Heart left ventricle (tissue), 16 donors: ENCODE measurements at regions of chr18 and their contacts with region 1.

Region 1: GRCh38 chr18:13726232-13726971 is at the starts of genes FAM210A and RNMT:
- DNase-seq: peak; percentile 96 to 98 (median 98)
- ATAC-seq: peak; percentile 96 to 98 (median 98)
- H3K4me3 ChIP-seq: peak within 1 kb of the TSS; percentile 72 to 97 (median 86)
- H3K27ac ChIP-seq: peak within 1 kb of the TSS; percentile 84 to 99 (median 91)
- H3K4me1 ChIP-seq: peaks cover 0 to 50% (median 24%) of the 10 kb centered on the region in 12 donors
- H3K27me3 ChIP-seq: no peaks in the 10 kb centered on the region
- CTCF ChIP-seq: peak in 5 of 12 donors; percentile 19 to 46 (median 41)
- POLR2A ChIP-seq: peak in 1 of 2 donors; percentile 71
- total RNA-seq, gene FAM210A: 29.3 to 66.4 (median 48.7) TPM
- total RNA-seq, gene RNMT: 19.9 to 38.0 (median 26.6) TPM

Region 2: GRCh38 chr18:13548966-13549879 is 177.2 kb before region 1 on chr18:
- intact Hi-C with region 1: loop called in 1 of 10 experiments (anchors 10 kb)
- DNase-seq: no peak
- ATAC-seq: peak; percentile 45 to 69 (median 63)
- H3K4me3 ChIP-seq: no peak overlapping the region
- H3K27ac ChIP-seq: peak overlapping the region in 10 of 12 donors; percentile 16 to 81 (median 36)
- H3K4me1 ChIP-seq: peaks cover 2 to 74% (median 27%) of the 10 kb centered on the region in 12 donors
- H3K27me3 ChIP-seq: no peaks in the 10 kb centered on the region
- CTCF ChIP-seq: no peak
- POLR2A ChIP-seq: no peak

Region 3: DNA sequence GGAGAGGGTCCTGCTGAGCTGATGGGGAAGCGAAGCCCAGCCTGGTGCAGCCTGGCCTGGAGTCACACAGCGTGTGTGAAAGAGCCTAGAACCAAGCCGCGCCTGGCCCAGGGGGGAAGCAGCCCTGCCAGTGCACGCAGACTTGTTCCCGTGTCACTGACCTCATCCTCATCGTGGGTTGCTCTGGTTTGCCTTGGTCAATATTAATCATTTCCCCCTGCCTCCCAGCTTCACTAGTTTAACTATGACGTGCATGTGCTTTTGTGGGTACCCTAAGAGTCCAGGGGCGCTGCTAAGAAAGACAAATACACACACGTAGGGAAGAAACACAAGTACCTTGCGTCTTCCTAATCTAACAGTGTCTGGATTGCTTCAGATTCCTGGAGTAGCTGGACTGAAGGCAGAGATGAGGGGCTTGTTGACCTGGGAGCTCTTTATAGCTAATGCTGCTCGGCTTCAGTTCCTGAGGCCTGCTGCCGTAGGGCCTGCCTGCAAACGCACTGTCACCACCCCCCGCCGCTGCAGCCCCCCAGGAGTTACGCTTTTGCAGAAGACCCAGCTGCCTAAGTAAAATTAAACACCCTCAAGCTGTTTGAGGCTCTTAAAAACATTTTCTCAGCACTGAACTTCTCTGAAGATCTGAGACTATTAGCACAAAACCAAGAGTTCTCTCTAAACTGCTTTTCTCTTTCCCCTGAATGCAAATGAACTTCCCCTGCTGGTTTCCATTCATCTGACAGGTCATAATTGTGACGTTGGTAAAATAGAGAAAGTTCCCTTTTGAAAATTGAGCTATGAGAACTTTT is 159.3 kb before region 1 on chr18:
- intact Hi-C with region 1: loop called in 2 of 10 experiments (anchors 10 kb)
- DNase-seq: peak in 3 of 5 donors; percentile 56 to 79 (median 73)
- ATAC-seq: peak in 3 of 4 donors; percentile 6 to 10 (median 6)
- H3K4me3 ChIP-seq: peak overlapping the region in 1 of 12 donors; percentile 25
- H3K27ac ChIP-seq: peak overlapping the region in 8 of 12 donors; percentile 22 to 94 (median 72)
- H3K4me1 ChIP-seq: peaks cover 0 to 73% (median 41%) of the 10 kb centered on the region in 12 donors
- H3K27me3 ChIP-seq: no peaks in the 10 kb centered on the region
- CTCF ChIP-seq: no peak
- POLR2A ChIP-seq: no peak

Region 4: DNA sequence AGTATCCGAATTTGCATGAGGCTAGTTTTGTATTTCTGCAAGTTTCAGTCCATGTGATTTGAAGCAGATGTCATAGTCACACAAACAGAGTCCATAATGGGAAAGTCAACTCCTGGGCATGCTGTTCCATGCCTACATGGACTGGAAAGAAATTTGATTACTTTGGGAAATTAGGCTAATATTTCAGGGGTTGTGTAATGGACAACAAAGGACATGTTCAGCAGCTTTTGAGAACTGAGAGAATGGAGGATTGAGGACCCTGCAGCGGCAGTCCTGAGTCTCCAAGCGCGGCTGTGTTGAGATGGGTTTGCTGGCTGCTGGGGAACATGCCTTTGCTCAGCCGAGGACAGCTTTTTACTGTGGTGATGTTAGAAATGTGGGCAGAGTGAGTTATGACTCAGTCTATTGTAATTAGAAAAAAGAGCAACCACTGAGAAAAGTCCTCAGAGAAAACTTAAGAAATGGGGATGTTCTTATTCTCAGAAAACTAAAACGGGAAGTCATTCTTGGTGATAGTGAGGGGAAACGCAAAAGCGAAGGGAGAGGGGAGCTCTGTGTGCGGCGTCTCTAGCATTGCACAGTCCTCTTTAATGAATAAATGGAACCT is 149.2 kb before region 1 on chr18:
- intact Hi-C with region 1: no loop called
- DNase-seq: no peak
- ATAC-seq: peak; percentile 28 to 64 (median 59)
- H3K4me3 ChIP-seq: peak overlapping the region in 1 of 12 donors; percentile 24
- H3K27ac ChIP-seq: peak overlapping the region in 3 of 12 donors; percentile 15 to 86 (median 31)
- H3K4me1 ChIP-seq: peaks cover 0 to 45% (median 16%) of the 10 kb centered on the region in 12 donors
- H3K27me3 ChIP-seq: no peaks in the 10 kb centered on the region
- CTCF ChIP-seq: no peak
- POLR2A ChIP-seq: no peak

Region 5: DNA sequence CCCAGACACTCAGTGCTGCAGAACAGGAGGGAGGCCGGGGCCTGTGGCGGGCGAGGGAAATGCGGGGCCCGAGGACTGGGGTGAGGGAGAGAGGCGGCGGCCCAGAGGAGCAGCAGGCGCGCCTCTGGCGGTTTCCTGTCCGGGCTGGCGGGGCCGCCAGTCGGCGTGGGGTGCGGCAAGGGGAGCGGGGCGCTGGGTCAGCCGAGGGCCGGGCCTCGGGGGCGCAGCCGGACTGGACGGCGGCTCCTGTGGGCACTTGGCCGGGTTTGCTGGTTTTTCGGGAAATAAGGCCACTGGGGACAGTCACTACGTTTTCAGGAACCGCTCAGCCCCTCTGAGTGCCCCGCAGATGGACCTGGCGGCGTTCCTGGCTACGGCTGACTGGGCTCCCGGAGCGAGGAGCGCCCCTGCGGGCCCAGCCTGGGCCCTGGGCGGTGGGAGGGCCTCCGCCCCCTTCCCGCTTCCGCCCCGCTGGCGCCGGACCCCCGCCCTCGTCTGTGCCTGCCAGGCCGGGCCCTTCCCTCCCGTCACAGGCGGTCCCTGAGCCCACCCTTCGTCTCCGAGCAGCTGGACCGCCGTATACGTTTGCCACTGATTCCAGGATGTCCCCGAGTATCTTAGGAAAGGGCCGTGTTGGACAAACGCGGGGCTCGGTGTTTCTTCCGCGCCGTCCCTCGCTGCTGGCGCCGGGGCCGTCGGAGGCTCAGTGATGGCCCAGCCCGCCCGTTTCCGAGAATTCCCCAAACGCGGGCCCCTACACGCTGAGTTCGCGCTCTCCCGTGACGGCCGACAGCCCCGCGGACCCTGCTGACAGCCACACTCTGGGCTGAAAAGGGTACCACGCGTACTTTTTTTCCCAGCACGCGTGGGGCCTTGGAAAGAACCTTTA is 84.6 kb before region 1 on chr18:
- intact Hi-C with region 1: loop called in 8 of 10 experiments (anchors 5 to 10 kb)
- DNase-seq: peak; percentile 53 to 83 (median 72)
- ATAC-seq: peak; percentile 24 to 75 (median 70)
- H3K4me3 ChIP-seq: peak overlapping the region; percentile 5 to 59 (median 48)
- H3K27ac ChIP-seq: peak overlapping the region; percentile 54 to 90 (median 77)
- H3K4me1 ChIP-seq: peaks cover 0 to 50% (median 19%) of the 10 kb centered on the region in 12 donors
- H3K27me3 ChIP-seq: no peaks in the 10 kb centered on the region
- CTCF ChIP-seq: peak in 4 of 12 donors; percentile 0 to 17 (median 14)
- POLR2A ChIP-seq: no peak

Region 6: DNA sequence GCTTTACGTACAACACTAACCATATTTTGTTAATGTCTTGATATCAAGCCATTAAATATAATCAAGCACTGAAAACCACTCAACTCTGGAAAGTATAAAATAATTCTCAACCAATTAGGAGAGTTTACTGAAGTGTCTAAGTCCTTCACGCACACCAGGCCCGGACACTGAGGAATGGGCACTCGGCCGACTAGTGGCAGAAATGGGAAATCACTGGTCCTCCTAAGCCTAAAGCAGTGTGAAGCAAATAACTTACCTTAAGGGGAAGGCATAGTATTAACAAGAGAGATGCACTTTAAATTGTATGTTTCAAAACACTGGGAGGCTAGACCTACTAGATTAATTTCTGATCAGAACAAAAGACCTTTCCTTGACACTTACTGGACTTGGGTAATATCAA is 45.8 kb before region 1 on chr18:
- intact Hi-C with region 1: no loop called
- DNase-seq: peak in 3 of 5 donors; percentile 38 to 48 (median 46)
- ATAC-seq: peak; percentile 63 to 74 (median 70)
- H3K4me3 ChIP-seq: no peak overlapping the region
- H3K27ac ChIP-seq: peak overlapping the region in 8 of 12 donors; percentile 6 to 94 (median 76)
- H3K4me1 ChIP-seq: peaks cover 0 to 60% (median 15%) of the 10 kb centered on the region in 12 donors
- H3K27me3 ChIP-seq: no peaks in the 10 kb centered on the region
- CTCF ChIP-seq: peak; percentile 35 to 65 (median 48)
- POLR2A ChIP-seq: no peak

Region 7: GRCh38 chr18:13800505-13801259 is 74.3 kb after region 1 on chr18:
- intact Hi-C with region 1: loop called in 1 of 10 experiments (anchors 10 kb)
- DNase-seq: peak; percentile 65 to 85 (median 76)
- ATAC-seq: peak; percentile 89 to 98 (median 94)
- H3K4me3 ChIP-seq: peak overlapping the region in 10 of 12 donors; percentile 6 to 49 (median 33)
- H3K27ac ChIP-seq: no peak overlapping the region
- H3K4me1 ChIP-seq: peaks cover 0 to 15% (median 4%) of the 10 kb centered on the region in 12 donors
- H3K27me3 ChIP-seq: peaks cover 0 to 30% (median 0%) of the 10 kb centered on the region in 9 donors
- CTCF ChIP-seq: peak; percentile 26 to 66 (median 50)
- POLR2A ChIP-seq: no peak